Posterior cingulate gyrus (tissue), 11 donors: ENCODE measurements at regions of chr1 and their contacts with region 1.

Region 1: GRCh38 chr1:47997289-47998200 is at the start of gene TRABD2B:
- DNase-seq: peak; percentile 64 to 97 (median 80)

Region 2: DNA sequence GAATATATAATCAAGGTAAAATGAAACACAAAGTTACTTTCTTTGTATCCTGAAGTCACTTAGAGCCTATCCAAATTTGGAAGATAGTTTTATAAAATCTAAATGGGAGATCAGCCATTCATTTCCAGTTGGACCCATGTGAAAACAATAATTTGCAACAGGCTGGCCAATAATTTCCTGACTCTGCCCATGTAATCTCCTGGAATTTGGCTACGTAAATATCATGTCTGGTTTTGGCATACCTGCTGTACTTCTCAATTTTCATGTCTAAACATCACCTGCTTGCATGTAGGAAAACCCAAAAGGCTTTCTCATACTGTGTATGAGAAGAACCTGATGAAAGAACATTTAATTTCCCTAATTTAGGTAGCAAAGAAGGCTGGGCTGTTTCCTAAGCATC is 938.2 kb before region 1 on chr1:
- intact Hi-C with region 1: no loop called
- DNase-seq: no peak

Region 3: DNA sequence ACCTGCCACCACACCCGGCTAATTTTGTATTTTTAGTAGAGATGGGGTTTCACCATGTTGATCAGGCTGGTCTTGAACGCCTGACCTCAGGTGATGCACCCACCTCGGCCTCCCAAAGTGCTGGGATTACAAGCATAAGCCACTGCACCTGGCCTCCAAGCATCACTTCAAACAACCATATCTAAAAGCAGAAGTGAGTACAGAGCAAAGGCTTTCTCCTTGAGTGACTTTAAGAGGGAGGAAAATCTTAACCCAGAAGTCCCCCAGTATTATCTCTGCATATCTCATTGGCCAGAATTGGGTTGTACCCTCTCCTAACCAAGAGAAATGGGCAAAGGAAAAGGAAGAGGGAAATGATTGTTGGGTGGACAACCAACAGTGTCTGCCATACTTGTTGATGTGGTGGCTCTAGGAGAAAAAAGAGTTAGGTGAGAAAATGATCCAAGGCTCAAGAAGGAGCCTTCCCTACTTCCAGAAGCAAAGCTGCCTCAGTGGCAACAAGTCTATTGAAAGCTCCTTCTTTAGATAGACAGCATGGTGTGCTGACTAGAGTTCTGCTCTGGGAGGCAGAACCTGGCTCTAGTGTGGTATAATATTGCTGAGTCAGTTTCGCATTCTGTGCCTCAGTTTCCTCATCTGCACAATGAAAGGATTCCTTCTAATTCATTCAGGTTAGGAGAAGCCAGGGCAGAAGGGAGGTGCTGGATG is 598.3 kb before region 1 on chr1:
- intact Hi-C with region 1: no loop called
- DNase-seq: no peak

Region 4: DNA sequence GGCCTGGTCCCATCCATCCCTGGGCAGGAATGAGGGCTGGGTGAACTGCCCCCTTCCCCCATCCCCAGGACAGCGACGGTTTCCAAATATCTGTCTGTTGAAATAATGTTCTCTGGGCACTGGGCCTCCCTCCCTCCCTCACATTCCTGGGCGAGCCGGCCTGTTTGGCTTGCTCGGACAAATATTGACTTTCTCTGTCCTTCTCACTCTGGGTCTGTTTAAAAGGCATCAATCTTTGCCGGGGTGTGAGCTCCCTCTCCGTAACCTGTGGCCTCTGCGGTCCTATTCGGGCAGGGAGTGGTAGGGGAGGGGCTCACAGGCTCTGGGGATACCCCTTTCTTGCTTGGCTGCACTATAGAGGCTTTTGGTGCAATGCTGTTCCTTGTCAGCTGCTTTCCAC is 519.5 kb before region 1 on chr1:
- intact Hi-C with region 1: no loop called
- DNase-seq: peak in 1 of 10 donors; percentile 67

Region 5: DNA sequence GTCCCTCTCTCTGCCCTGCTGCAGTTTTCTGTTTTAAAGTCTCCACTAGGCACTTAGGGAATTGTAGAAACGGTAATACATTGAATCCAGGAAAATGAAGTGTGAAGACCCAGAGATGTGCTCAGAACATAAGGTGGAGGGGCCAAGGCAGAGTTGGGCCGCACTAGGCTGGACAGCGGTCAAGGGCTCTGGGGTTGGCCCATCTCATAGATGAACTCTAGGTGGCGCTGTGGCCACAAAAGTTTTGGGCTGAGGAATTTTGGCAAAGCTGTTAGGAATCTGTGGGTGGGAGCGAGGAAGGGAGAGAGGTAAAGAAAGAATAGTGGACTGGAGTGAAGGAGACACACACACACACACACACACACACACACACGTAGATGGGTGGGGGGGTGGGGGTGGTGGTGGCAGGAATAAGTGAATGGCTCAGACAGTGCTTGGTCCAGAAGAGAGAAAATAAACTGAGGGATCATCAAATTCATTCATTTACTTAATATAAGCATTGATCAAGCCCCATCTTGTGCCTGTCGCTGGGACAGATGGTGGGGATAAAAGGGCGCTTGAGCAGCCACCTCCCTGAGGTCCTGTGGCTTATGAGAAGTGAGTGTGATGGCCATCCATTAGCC is 258.9 kb before region 1 on chr1:
- intact Hi-C with region 1: loop called (anchors 10 kb)
- DNase-seq: peak in 5 of 10 donors; percentile 28 to 85 (median 49)

Region 6: DNA sequence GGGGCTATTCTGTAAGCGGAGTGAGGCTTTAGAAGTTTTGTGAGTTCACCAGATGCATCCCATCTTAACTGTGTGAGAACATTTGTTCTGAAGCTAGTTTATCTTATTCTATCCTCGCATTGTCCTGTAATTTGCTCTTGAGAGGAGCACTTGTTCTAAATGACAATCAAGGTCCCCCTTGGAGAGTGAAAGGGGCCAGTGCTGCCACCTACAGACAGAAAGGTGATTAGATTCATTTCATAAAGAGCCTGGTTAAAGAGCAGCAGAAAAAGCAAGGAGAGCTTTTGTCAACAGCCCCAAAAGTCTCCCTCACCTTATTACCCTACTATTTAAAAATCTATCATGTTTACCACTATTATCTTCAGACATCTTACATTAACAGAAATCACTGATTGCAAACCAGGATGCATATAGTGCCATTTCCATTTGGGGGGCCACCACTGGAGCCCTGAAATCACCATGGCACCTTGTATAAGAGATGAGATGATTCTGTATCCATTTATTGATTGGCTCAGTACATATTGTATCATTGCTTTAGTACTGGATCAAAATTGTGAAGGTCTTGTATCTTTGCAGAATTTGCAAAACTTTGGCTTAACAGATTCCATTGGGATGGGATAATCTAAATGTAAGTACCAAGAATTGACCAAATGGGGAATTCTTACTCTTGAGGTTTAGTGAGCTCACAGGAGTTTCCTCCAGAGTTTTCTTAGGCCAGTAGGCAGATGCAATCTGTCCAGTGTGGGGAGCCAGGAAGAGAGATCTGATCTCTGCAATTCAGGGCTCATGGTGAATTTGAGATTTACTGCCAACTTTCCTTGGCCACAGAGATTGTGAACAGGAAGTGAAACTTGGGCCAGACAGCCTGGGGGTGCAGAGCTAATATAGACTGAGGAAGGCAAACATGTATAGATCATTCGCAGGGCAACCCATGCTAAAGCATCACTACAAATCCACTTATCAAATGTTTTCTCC is 63.9 kb after region 1 on chr1:
- intact Hi-C with region 1: loop called (anchors 1 kb)
- DNase-seq: peak in 6 of 10 donors; percentile 35 to 86 (median 66)

Region 7: DNA sequence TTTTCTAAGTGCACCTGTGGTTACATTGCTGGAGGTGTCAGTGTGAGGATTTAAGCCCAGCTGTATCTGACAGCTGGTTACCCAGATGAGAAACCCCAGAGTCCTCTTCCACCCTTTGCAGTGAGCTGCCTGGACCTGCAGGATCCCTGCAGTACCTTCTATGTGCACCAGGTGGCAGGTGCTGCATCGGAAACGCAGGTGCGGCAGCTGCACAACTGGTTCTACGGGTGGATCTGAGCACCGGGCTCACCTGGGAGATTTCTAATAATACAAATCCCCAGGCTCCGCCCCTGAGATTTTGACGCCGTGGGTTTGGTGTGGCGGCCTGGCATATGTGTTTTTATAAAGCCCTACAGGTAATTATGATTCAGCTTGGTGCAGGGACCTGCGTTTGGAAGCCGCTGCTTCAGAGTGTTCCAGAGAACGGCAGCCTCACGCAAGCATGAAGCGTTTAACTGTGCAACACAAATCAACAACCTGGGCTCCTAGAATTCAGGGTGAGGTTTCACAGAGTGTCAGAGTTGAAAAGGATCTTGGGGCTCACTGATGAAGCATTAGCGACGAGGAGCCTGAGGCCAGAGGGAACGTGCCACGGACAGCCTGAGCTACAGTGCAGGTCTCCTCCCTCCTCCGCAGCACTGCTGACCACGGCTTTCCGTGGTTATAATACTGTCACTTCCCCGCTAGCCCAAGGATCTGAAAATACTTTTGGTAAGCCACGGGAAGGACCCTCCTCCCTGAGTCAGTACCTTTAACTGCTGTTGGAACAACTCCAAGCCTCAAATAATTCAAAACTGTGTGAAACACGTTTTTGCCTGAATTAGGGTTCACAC is 96.4 kb after region 1 on chr1:
- intact Hi-C with region 1: no loop called
- DNase-seq: peak in 7 of 10 donors; percentile 19 to 91 (median 53)

Region 8: GRCh38 chr1:48202030-48202752 is 204.6 kb after region 1 on chr1:
- intact Hi-C with region 1: loop called (anchors 5 kb)
- DNase-seq: peak; percentile 48 to 95 (median 78)